Activated CD4-positive, alpha-beta T cell treated with anti-CD3 and anti-CD28 coated beads for 36 hours (primary cell): ENCODE measurements at regions of chr2 and their contacts with region 1.

Region 1: GRCh38 chr2:172972005-172972619 is 103.5 kb upstream of the MAP3K20 start:
- DNase-seq: peak; percentile 71
- ATAC-seq: peak; percentile 73
- H3K4me3 Mint-ChIP-seq: no peak overlapping the region
- H3K27ac Mint-ChIP-seq: no peak overlapping the region
- H3K4me1 Mint-ChIP-seq: peaks cover 34% of the 10 kb centered on the region
- H3K27me3 Mint-ChIP-seq: no peaks in the 10 kb centered on the region

Region 2: DNA sequence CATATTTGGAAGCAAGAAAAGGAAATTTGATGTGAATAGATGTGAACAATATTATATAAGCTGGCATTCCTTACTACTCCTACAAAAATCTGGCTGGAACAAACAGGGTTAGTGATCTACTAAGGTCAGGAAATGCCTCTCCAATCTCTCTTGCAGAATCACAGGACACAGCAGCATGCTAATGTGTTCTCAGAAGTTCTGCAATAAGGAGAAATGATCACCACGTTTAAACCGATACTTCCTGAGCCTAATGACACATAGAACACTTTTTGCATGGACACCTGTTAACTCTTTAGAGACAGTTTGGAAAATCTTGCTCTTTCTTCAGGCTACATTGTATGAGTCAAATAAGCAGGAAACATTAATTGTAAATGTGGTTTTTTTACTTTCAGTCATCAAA is 13.9 kb after region 1 on chr2:
- CTCF ChIA-PET with region 1: interaction called, 8 read pairs
- POLR2A ChIA-PET with region 1: interaction called, 3 read pairs
- intact Hi-C with region 1: loop called in 1 of 2 experiments (anchors 1 kb)
- DNase-seq: no peak
- ATAC-seq: peak; percentile 85
- H3K4me3 Mint-ChIP-seq: no peak overlapping the region
- H3K27ac Mint-ChIP-seq: peak overlapping the region; percentile 1
- H3K4me1 Mint-ChIP-seq: peaks cover 12% of the 10 kb centered on the region
- H3K27me3 Mint-ChIP-seq: peaks cover 5% of the 10 kb centered on the region

Region 3: DNA sequence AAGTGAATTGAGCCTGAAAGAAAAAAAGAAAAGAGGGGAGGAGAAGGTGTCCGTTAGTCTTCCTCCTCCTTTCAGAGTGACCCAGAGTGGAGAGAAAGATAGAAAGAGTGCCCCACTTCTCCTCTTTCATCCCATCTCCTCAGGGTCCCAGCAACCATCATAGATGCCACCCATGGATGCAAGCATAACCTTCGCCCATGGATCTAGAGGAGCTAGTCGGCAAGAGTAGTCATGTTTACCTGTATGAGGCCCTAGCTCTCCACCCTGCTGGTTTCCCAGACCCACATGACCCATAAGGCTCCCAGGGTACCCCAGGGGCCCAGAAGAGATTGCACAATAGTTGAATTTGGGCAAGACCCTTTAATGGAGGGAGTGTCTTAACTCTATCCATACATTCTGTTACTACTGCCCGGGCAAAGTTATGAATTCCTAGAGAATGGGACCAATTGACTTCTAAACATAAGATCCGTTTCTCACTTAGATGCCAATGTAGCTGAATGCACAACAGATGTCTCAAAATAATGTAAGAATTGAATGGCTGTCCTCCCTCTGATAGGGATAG is 326.5 kb after region 1 on chr2:
- CTCF ChIA-PET with region 1: no interaction called
- POLR2A ChIA-PET with region 1: no interaction called
- intact Hi-C with region 1: no loop called
- DNase-seq: no peak
- ATAC-seq: no peak
- H3K4me3 Mint-ChIP-seq: no peak overlapping the region
- H3K27ac Mint-ChIP-seq: no peak overlapping the region
- H3K4me1 Mint-ChIP-seq: peaks cover 2% of the 10 kb centered on the region
- H3K27me3 Mint-ChIP-seq: peaks cover 8% of the 10 kb centered on the region